ENCODE measurements at regions of chr12 and their contacts with region 1.

Region 1: GRCh38 chr12:89051065-89051677 is 301.1 kb downstream of the DUSP6 start:
- DNase-seq: peak; percentile 26
- ATAC-seq: peak; percentile 74
- H3K4me3 Mint-ChIP-seq: no peak overlapping the region
- H3K27ac Mint-ChIP-seq: no peak overlapping the region
- H3K4me1 Mint-ChIP-seq: peaks cover 1% of the 10 kb centered on the region
- H3K27me3 Mint-ChIP-seq: peaks cover 2% of the 10 kb centered on the region
- CTCF ChIP-seq: peak; percentile 87

Region 2: DNA sequence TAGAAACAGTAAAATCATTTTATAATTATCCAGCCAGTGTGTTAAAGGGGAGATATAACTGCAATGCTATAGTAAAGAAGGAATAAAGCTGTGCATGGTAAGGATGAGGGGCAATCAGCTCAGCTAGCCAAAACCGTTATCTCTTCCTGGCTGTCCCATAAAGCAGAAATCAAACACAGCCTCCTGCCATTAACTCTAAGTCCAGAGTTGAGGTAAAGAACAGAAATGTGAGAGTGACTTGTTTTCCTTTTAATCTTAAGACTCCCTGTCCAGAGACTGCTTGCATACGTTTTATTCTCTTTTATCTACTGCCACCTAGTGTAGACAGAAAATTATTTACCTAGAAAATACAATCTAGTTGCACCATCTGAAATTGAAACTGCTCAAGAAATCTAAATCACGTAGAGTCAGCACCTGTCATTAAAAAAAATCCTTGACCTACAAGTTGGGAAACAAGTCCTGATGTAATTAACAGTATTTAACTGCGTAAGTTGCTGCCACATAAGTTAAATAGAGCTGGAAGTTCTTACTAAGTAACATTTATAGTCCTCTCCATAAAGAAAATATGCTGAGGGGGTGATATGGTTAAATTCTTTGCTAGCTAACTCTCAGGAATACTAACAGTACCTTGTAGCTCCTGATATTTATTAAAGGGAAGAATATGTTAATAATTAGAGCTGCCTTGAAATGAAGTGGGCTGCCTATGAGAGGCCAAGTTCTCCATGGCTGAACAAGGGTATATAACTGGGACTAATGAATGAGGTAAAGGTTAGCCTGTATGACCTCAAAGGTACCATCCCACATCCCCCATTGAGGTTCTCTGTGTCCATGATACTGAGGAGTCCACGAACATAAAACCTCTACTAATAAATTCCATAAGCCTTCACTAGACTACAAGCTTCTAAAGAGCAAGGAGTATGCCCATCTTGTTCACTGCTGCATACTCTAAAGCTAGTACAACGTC is 410.8 kb after region 1 on chr12:
- CTCF ChIA-PET with region 1: interaction called, 25 read pairs
- POLR2A ChIA-PET with region 1: no interaction called
- intact Hi-C with region 1: loop called (anchors 1 kb)
- DNase-seq: no peak
- ATAC-seq: peak; percentile 91
- H3K4me3 Mint-ChIP-seq: peak overlapping the region; percentile 46
- H3K27ac Mint-ChIP-seq: peak overlapping the region; percentile 79
- H3K4me1 Mint-ChIP-seq: peaks cover 32% of the 10 kb centered on the region
- H3K27me3 Mint-ChIP-seq: no peaks in the 10 kb centered on the region
- CTCF ChIP-seq: peak; percentile 76